Activated naive CD8-positive, alpha-beta T cell treated with anti-CD3 and anti-CD28 coated beads, Interleukin-2, amount 10 ng/mL, durations not matched to agents 7 days and 5 days (primary cell): ENCODE measurements at regions of chr11 and their contacts with region 1.

Region 1: DNA sequence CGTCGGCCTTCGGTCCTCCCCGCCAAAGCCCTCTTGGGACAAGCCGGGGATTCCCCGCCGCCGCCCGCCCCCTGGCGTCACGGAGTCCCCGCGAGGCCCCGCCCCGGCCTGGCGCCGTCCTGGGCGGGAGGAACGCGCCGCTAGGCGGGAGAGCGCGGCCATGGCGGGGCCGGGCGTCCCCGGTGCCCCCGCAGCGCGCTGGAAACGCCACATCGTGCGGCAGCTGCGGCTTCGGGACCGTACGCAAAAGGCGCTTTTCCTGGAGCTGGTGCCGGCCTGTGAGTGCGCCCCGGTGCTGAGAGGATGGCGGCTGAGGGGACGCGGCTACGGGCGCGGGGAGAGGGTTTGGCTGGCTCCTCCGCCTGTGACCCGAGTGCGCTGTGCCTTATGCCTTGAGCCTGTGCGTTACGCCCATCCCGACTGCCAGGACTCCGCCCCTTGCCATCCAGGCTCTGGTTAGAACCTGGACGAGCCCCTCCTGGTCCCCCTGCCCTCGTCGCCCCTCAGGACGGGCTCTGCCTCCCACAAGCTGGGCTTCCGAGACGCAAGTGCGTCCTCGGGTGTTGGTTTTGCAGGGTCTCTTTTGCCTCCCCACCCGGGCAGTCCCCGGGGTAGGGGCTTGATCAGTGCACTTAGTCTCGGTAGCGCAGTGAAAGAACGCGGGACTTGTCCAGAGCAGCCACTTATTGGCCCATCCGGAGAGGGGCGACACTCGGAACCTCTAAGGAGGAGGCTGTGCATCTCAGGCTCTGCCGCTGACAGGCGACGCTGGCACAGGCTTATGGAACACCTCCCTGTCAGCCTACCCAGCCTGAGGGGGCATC is at the start of gene ATG16L2:
- DNase-seq: peak; percentile 98
- ATAC-seq: peak; percentile 69
- H3K4me3 Mint-ChIP-seq: peak within 1 kb of the TSS; percentile 99
- H3K27ac Mint-ChIP-seq: peak within 1 kb of the TSS; percentile 98
- H3K4me1 Mint-ChIP-seq: peaks cover 38% of the 10 kb centered on the region
- H3K27me3 Mint-ChIP-seq: no peaks in the 10 kb centered on the region
- total RNA-seq, gene ATG16L2: 159 to 163 TPM

Region 2: GRCh38 chr11:72722050-72722748 is 92.3 kb before region 1 on chr11:
- POLR2A ChIA-PET with region 1: interaction called, 21 read pairs
- DNase-seq: peak; percentile 86
- ATAC-seq: peak; percentile 87
- H3K4me3 Mint-ChIP-seq: peak overlapping the region; percentile 90
- H3K27ac Mint-ChIP-seq: peak overlapping the region; percentile 93
- H3K4me1 Mint-ChIP-seq: peaks cover 33% of the 10 kb centered on the region
- H3K27me3 Mint-ChIP-seq: no peaks in the 10 kb centered on the region

Region 3: DNA sequence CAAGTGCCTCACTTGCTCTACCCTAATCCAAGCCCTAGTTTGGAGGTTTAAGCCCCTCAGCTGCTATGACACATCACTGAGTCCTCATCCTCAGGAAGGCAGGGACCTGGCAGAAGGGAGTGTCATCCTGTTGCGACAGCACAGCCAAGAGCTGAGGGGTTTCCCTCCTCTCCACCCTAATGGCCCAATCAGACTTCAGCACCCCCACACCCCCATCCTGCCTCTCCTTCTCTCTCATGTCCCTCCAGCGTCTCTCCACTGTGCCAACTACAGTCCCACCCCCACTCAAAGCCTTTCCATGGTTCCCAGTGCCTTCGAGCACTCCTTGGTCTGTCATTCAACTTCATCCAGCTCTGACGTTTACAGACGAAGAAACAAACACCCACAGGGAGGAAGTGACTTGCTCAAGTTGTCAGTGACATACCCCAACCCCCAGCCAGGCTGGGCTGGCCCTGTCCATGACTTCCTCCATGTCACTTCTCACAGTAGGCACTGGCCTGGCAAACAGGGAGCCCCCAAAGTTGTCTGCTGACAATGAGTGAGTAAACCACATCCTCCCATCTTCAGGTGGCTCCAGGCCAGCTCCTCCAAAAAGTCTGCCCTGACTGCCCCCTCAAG is 77.9 kb before region 1 on chr11:
- POLR2A ChIA-PET with region 1: interaction called, 13 read pairs
- DNase-seq: peak; percentile 68
- ATAC-seq: peak; percentile 92
- H3K4me3 Mint-ChIP-seq: peak overlapping the region; percentile 85
- H3K27ac Mint-ChIP-seq: peak overlapping the region; percentile 100
- H3K4me1 Mint-ChIP-seq: peaks cover 50% of the 10 kb centered on the region
- H3K27me3 Mint-ChIP-seq: no peaks in the 10 kb centered on the region

Region 4: GRCh38 chr11:72793425-72794367 is 20.8 kb before region 1 on chr11 and contains the start of gene STARD10:
- POLR2A ChIA-PET with region 1: interaction called, 17 read pairs
- DNase-seq: peak; percentile 97
- ATAC-seq: peak; percentile 96
- H3K4me3 Mint-ChIP-seq: peak within 1 kb of the TSS; percentile 96
- H3K27ac Mint-ChIP-seq: peak within 1 kb of the TSS; percentile 99
- H3K4me1 Mint-ChIP-seq: peaks cover 17% of the 10 kb centered on the region
- H3K27me3 Mint-ChIP-seq: no peaks in the 10 kb centered on the region
- total RNA-seq, gene STARD10: 7.8 to 8.0 TPM

Region 5: DNA sequence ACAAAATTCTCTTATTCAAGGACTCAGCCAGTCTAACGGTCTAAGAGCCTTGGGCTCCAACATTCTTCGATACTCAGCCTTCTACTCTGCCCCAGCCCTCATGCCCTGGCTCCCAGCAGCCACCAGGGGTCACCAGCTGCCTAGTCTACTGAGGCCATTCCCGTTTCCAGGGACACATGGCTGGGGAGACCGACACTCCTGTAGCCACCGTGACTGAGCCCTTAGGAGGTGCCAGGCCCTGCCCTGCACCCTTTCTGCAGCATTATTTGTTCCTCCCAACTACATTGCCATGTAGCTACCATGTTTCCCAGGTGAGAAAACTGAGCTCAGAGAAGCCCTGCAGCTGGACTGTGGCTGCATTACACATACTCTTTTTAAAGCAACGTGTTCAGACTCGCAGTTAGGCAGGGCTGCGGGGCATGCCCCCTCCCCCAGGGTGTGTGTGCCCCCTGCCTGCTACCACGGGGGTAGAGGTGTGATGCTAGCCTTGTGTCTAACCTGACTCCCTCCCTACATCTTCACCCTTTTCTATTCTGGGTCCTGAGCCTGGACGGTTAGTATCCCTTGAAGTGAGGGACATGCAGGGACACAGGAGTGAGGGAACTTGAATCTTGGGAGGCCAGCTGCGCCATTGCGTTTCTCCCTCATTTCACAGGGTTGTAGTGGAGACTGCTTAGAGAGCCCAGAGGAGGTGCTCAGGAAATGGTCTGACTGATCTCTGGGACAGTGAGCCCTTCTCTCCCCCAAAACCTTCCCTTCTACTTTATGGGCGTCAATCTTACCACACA is 17.2 kb after region 1 on chr11:
- POLR2A ChIA-PET with region 1: interaction called, 10 read pairs
- DNase-seq: peak; percentile 61
- ATAC-seq: peak; percentile 48
- H3K4me3 Mint-ChIP-seq: no peak overlapping the region
- H3K27ac Mint-ChIP-seq: peak overlapping the region; percentile 16
- H3K4me1 Mint-ChIP-seq: peaks cover 27% of the 10 kb centered on the region
- H3K27me3 Mint-ChIP-seq: no peaks in the 10 kb centered on the region